ENCODE measurements at regions of chr19 and their contacts with region 1.

Region 1: DNA sequence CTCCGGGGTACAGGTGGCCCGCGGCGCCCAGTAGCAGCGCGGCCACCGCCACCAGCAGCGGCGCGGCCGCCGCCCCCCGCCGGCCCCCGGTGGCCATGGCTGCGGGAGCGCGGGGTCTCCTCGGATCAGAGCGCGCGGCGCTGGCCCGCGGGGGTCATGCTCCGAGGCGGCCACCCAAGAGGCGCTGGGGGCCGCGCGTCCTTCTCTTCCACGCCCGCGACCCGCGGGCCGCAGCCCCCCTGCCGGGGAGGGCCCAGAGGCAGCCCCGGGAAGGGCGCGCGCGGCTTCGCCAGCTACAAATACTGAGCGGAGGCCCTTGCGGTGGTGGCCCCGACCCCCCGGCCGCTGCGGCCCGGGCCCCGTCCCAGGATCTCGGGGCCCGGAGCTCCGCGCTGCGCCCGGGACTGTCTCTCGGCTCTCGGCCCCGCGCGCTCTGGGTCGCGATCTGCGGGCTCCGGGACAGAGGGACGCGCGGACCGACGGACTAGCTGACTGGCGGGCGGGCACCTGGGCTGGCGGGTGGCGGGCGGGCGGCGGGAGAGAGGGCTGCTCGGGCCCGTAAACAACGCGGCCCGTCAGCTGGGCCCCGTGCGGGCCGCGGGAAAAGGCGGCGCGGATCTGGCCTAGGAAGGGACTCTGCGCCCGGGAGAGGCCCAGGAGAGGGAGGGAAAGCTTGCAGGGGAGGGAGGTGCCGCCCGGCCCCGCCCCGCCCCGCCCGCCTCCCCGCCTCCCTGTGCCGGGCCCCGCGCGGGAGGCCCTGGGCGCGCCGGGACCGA is at the start of gene INSR:
- DNase-seq: peak; percentile 89 to 94
- H3K4me3 ChIP-seq: peak within 1 kb of the TSS; percentile 59 to 100
- H3K27ac ChIP-seq: peak within 1 kb of the TSS; percentile 96 to 99
- H3K4me1 ChIP-seq: peaks cover 0 to 4% of the 10 kb centered on the region in 2 donors
- H3K27me3 ChIP-seq: no peaks in the 10 kb centered on the region
- CTCF ChIP-seq: peak in 1 of 4 experiments; percentile 9
- POLR2A ChIP-seq: peak; percentile 68 to 91
- total RNA-seq, gene INSR: 46.0 to 97.6 (median 68.3) TPM

Region 2: DNA sequence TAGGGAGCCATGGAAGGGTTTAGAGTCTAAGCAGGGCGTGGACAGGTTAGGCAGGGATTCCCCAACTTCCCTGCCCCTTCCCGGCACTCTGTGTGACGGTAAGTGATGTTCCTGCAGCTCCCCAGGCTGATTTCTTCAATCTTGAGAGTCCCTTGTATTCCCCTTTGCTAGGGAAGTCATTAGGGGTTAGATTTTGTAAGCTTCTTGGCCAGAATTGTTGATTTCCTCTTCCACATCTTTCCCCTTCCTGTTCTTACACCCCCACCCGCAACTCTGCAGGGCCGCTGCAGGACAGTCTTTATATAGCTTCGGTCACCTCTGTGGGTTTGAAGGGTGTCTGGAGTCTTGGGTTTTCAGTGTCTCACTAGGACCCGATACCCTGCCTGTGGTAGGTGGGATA is 417.2 kb before region 1 on chr19:
- intact Hi-C with region 1: no loop called
- DNase-seq: no peak
- H3K4me3 ChIP-seq: no peak overlapping the region
- H3K27ac ChIP-seq: no peak overlapping the region
- H3K4me1 ChIP-seq: no peaks in the 10 kb centered on the region
- H3K27me3 ChIP-seq: no peaks in the 10 kb centered on the region
- CTCF ChIP-seq: no peak
- POLR2A ChIP-seq: no peak

Region 3: DNA sequence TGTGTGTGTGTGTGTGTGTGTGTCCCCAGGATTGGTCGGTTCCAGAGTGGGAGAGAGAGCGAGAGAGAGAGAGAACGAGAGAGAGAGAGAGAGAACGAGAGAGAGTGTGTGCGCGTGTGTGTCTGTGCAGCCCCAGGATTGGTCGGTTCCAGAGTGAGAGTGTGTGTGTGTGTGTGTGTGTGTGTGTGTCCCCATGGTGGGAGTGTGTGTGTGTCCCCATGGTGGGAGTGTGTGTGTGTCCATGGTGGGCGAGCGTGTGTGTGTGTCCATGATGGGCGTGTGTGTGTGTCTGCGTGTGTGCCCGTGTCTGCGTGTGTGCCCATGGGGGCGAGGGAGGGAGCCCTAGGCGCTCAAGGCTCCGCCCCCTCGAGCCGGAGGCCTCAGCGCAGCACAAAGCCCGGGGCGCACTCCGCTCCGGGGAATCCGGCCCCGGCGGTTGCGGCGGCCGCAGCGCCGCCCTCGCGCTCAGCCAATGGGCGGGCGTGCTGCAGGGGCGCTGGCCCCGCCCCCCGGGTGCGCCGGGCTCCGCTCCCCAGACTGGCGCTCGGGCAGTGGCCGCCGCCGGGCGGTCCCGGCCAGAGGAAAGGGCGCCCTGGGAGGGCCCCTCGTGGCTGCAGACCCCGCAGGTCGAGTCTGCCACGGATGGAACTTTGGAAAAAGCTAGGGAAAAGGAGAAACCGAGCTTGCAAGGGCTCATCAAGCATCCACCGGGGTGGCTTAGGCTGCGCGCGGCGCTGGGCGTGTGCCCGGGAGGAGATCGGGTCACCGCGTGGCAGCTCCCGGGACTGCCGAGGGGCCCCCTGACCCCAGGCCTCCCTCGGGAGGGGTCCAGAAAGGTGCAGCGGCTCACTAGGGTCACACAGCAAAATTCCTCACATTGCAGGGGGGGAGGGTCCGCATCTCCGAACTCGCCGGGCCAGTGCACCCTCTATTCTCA is 96.0 kb before region 1 on chr19:
- intact Hi-C with region 1: loop called (anchors 5 kb)
- DNase-seq: peak; percentile 92 to 94
- H3K4me3 ChIP-seq: peak overlapping the region; percentile 76 to 89
- H3K27ac ChIP-seq: peak overlapping the region; percentile 92 to 96
- H3K4me1 ChIP-seq: no peaks in the 10 kb centered on the region
- H3K27me3 ChIP-seq: no peaks in the 10 kb centered on the region
- CTCF ChIP-seq: peak in 2 of 4 experiments; percentile 16 to 48
- POLR2A ChIP-seq: peak; percentile 81 to 92

Measured in uterus (tissue), 4 donors.